ENCODE measurements at regions of chr11 and their contacts with region 1.

Region 1: DNA sequence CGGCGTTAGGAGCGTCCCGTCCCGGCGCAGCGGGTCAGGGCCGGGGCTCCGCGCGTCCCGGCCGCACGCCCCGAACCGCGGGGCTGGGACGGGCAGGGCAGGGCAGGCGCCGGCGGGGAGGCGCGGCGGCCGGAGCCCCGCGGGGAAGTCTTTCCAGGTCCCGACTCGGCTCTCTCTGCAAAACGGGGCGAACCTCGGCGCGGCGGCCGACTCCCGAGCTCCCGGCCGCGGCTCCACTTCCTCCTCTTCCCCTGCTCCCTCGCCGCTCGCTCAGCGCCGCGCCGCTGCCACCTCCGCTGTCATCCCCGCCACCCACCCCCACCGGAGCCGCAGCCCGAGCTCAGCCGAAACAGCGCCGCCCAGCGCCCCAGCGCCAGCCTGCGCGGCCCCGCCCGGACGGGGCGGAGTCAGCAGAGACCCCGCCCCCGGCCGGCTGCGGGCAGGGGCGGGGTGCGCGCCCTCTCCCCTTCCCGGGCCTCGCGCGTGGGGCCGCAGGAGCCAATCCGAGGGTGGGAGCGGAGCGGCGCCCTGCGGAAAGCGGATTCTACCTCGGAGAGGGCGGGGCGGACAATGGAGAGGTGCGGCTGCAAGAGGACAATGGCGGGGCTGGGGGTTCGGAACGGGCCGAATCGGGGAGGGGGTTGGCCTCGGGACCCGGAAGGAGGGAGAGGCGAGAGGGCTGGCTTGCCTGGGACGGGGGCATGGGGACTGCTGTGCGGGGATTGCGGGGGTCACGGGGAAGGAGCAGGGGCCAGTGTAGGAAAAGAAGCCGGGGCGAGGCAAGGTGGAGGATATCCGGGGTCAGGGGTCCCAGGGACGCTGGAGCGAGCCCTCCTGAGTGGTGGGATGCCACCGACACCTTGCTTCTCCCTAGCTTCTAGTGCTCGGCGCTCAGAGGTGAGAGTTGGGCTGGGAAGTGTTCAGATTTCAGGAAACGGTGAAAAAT is at the start of gene GDPD5:
- DNase-seq: peak; percentile 93
- ATAC-seq: peak; percentile 94
- H3K4me3 Mint-ChIP-seq: peak within 1 kb of the TSS; percentile 76
- H3K27ac Mint-ChIP-seq: peak within 1 kb of the TSS; percentile 29
- H3K4me1 Mint-ChIP-seq: peaks cover 18% of the 10 kb centered on the region
- H3K27me3 Mint-ChIP-seq: no peaks in the 10 kb centered on the region
- total RNA-seq, gene GDPD5: 16.8 to 22.0 TPM

Region 2: GRCh38 chr11:75399344-75400145 is 126.3 kb before region 1 on chr11 and contains the start of gene RPS3:
- CTCF ChIA-PET with region 1: no interaction called
- POLR2A ChIA-PET with region 1: interaction called, 3 read pairs
- intact Hi-C with region 1: loop called (anchors 1 kb)
- DNase-seq: peak; percentile 94
- ATAC-seq: peak; percentile 92
- H3K4me3 Mint-ChIP-seq: peak within 1 kb of the TSS; percentile 96
- H3K27ac Mint-ChIP-seq: peak within 1 kb of the TSS; percentile 98
- H3K4me1 Mint-ChIP-seq: peaks cover 41% of the 10 kb centered on the region
- H3K27me3 Mint-ChIP-seq: no peaks in the 10 kb centered on the region
- total RNA-seq, gene RPS3: 4,536 to 4,569 TPM

Region 3: DNA sequence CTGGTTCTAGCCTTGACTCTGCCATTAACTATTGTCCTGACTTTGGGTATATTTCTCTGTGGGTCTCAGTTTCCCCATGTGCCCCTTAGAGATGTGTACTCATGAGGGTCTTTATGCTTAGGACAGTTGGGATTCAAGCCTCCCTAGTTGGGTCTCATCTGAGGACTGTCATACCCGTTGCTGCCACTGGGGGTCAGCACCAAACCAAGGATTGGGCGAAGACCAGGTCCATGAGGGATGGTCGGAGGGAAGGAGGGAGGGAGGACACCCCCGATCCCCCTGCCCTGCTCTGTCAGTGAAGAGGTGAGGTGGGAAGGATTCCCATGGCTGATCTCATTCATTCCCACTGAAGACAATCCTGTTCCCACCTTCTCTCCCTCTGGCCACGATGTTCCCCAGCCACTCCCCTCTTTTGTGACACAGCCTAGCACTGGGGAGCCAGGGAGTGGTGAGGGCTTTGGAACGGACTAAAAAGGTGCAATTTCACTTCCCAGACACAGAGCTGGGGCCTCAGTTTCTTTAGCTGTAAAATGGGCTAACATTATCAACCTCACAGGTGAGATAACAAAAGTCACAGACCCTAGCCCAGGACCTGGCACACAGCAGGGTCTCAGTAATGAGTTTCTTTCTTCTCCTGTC is 80.4 kb before region 1 on chr11:
- CTCF ChIA-PET with region 1: interaction called, 129 read pairs
- POLR2A ChIA-PET with region 1: interaction called, 3 read pairs
- intact Hi-C with region 1: no loop called
- DNase-seq: peak; percentile 84
- ATAC-seq: peak; percentile 87
- H3K4me3 Mint-ChIP-seq: no peak overlapping the region
- H3K27ac Mint-ChIP-seq: no peak overlapping the region
- H3K4me1 Mint-ChIP-seq: no peaks in the 10 kb centered on the region
- H3K27me3 Mint-ChIP-seq: no peaks in the 10 kb centered on the region

Region 4: DNA sequence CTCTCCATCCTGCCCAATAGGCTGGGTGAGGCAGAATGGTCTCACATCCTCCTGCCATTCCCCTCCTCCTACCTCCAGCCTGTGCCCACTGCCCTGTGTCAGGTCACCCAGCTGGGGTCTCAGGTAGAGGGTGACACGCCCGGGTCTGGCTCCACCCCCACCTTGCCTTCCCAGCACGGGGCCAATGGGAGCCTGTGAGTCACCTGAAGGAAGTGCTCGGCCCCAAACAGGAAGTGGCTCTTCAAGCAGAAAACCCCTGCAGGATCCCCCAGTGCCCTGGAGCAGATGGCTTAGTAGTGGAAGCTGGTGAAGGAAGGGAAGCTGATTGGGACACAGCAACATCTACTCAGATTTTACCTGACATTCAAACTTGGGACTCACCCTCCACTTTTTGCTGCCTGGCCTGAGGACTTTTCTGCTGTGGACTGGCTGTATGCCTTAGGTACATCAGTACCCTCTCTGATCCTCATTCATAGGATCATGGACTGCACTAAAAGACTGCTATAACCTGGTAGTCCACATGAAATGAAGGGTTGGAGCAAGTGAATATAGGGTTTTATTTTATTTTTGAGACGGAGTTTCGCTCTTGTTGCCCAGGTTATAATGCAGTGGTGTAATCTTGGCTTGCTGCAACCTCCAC is 33.6 kb before region 1 on chr11:
- CTCF ChIA-PET with region 1: interaction called, 5 read pairs
- POLR2A ChIA-PET with region 1: no interaction called
- intact Hi-C with region 1: loop called (anchors 1 to 2 kb)
- DNase-seq: peak; percentile 79
- ATAC-seq: peak; percentile 98
- H3K4me3 Mint-ChIP-seq: peak overlapping the region; percentile 60
- H3K27ac Mint-ChIP-seq: peak overlapping the region; percentile 95
- H3K4me1 Mint-ChIP-seq: peaks cover 20% of the 10 kb centered on the region
- H3K27me3 Mint-ChIP-seq: no peaks in the 10 kb centered on the region